IMR-90 (cell line): ENCODE measurements at regions of chr1 and their contacts with region 1.

Region 1: DNA sequence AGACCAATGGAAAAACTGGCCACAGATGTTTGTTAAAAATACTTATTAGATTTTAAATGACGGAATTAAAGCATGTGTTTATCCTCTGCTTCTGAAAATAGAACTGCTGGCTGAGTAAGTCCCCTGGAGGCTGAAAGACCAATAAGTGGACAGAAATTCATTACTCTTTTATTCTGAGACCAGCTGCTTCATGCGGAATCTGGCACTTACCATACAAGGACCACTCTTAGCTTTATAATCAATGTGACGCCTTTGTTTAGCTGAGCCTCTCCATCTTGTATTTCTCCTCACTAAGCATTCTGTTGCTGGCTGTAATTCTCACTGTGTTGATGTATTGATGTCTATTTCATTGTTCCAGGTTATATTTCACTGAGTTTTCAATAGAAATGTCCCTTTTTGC is 6.3 kb upstream of the EXO1 start:
- DNase-seq: no peak
- ATAC-seq: no peak
- H3K4me3 ChIP-seq: no peak overlapping the region
- H3K27ac ChIP-seq: no peak overlapping the region
- H3K4me1 ChIP-seq: peaks cover 14% of the 10 kb centered on the region
- H3K27me3 ChIP-seq: no peaks in the 10 kb centered on the region
- CTCF ChIP-seq: no peak
- POLR2A ChIP-seq: no peak
- RAD21 ChIP-seq: no peak

Region 2: DNA sequence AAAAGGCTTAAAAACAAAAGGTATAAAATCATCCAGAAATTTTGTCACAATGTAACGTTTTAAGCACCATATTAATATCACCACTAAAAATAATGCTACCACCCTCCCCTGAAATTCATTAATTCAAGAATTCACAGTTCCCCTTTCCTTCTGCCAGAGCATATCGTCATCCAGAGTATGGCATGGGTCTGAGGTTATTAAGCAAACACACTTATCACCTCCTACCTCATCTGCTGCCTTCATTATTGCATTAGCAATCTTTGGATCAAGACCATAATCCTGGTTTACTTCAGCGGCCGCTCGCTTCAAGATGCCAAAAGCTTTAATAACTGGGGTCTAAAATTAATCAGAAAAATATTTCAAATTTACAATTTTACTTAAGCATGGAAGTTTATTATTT is 328.3 kb before region 1 on chr1:
- CTCF ChIA-PET with region 1: no interaction called
- POLR2A ChIA-PET with region 1: no interaction called
- dilution Hi-C with region 1: no loop called
- in situ Hi-C with region 1: no loop called
- intact Hi-C with region 1: no loop called
- DNase-seq: no peak
- ATAC-seq: no peak
- H3K4me3 ChIP-seq: no peak overlapping the region
- H3K27ac ChIP-seq: no peak overlapping the region
- H3K4me1 ChIP-seq: 0 out of 2 replicates have a peak, but pooled peaks cover 2% of the 10 kb centered on the region
- H3K27me3 ChIP-seq: no peaks in the 10 kb centered on the region
- CTCF ChIP-seq: no peak
- POLR2A ChIP-seq: no peak
- RAD21 ChIP-seq: no peak

Region 3: DNA sequence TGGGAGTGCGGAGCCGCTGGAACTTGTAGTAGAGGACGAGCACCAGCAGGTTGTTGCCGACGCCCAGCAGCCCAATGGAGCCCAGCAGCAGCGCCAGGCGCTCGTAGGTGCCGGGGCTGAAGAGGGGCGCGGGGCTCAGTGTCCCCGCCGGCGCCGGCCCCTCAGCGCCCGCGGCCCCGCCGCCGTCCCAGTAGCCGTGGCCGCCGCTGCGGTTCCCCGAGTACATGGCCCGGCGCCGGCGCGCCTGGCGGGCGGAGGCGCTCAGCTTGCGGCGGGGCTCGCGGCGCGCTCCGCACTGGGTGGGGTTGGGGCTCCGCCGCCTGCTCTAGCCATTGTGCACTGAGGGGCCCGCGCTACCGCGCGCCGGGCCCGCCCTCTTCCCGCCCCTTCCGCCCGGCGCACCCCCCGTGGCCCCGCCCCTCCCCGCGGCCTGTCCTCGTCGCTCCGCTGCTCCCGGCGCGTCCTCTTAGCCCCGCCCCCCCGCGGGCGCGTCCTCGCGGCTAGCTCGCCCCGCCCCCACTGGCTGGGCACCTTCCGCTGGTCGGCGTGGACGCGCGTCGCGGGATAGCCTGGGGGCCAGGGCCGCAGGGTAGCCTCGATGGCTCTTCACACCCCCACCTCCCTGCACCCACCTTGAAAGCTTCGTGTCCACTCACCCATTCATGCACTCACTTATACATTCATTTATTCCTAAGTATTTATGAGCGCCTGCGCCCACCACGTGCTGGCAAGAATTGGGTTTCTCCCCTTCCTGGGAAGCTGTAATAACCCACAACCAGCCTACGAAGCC is 201.5 kb before region 1 on chr1 and contains the starts of genes CHML and OPN3:
- CTCF ChIA-PET with region 1: no interaction called
- POLR2A ChIA-PET with region 1: interaction called, 13 read pairs
- dilution Hi-C with region 1: no loop called
- in situ Hi-C with region 1: no loop called
- intact Hi-C with region 1: no loop called
- DNase-seq: peak; percentile 79
- ATAC-seq: peak; percentile 96
- H3K4me3 ChIP-seq: peak within 1 kb of the TSS; percentile 100
- H3K27ac ChIP-seq: peak within 1 kb of the TSS; percentile 100
- H3K4me1 ChIP-seq: peaks cover 10% of the 10 kb centered on the region
- H3K27me3 ChIP-seq: no peaks in the 10 kb centered on the region
- CTCF ChIP-seq: no peak
- POLR2A ChIP-seq: peak; percentile 87
- RAD21 ChIP-seq: no peak
- total RNA-seq, gene CHML: 25.6 and 34.2 TPM in 2 replicates
- total RNA-seq, gene OPN3: 21.1 and 21.9 TPM in 2 replicates

Region 4: DNA sequence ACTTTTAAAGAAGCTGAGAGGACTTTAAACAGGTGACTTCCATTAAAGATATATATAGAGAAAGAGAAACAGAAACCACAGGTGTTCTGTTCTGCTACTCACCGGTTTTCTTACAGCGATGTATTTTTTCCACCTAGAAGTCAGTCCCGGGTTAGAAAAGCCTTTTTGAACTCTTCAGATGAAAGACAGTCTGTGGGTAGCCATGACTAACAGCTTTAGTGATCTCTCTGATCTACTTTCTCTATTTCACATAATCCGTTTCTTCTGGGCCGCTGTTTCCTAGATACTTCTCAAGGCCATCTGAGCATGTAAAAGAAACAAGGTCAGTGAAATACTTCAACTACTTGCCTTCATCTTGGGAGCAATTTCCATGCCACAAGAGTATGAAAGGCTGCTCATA is 164.5 kb before region 1 on chr1:
- CTCF ChIA-PET with region 1: no interaction called
- POLR2A ChIA-PET with region 1: no interaction called
- dilution Hi-C with region 1: no loop called
- in situ Hi-C with region 1: no loop called
- intact Hi-C with region 1: no loop called
- DNase-seq: no peak
- ATAC-seq: no peak
- H3K4me3 ChIP-seq: no peak overlapping the region
- H3K27ac ChIP-seq: no peak overlapping the region
- H3K4me1 ChIP-seq: no peaks in the 10 kb centered on the region
- H3K27me3 ChIP-seq: peaks cover 2% of the 10 kb centered on the region; the same call in 1 of the 2 replicates
- CTCF ChIP-seq: no peak
- POLR2A ChIP-seq: no peak
- RAD21 ChIP-seq: no peak

Region 5: GRCh38 chr1:241706954-241707365 is 134.7 kb before region 1 on chr1:
- CTCF ChIA-PET with region 1: no interaction called
- POLR2A ChIA-PET with region 1: no interaction called
- dilution Hi-C with region 1: no loop called
- in situ Hi-C with region 1: no loop called
- intact Hi-C with region 1: no loop called
- DNase-seq: no peak
- ATAC-seq: no peak
- H3K4me3 ChIP-seq: no peak overlapping the region
- H3K27ac ChIP-seq: no peak overlapping the region
- H3K4me1 ChIP-seq: no peaks in the 10 kb centered on the region
- H3K27me3 ChIP-seq: 0 out of 2 replicates have a peak, but pooled peaks cover 2% of the 10 kb centered on the region
- CTCF ChIP-seq: no peak
- POLR2A ChIP-seq: no peak
- RAD21 ChIP-seq: no peak